Caco-2 (cell line): ENCODE measurements at regions of chr5 and their contacts with region 1.

Region 1: GRCh38 chr5:10056228-10056760 is 193.4 kb downstream of the ATPSCKMT start:
- DNase-seq: peak; percentile 55 to 67
- H3K4me3 ChIP-seq: no peak overlapping the region
- H3K4me3 Mint-ChIP-seq: no peak overlapping the region
- H3K27ac Mint-ChIP-seq: no peak overlapping the region
- H3K4me1 ChIP-seq: peaks cover 15% of the 10 kb centered on the region
- H3K4me1 Mint-ChIP-seq: peaks cover 13% of the 10 kb centered on the region
- H3K27me3 ChIP-seq: no peaks in the 10 kb centered on the region
- H3K27me3 Mint-ChIP-seq: peaks cover 6% of the 10 kb centered on the region
- CTCF ChIP-seq: no peak

Region 2: GRCh38 chr5:10111571-10111970 is 55.3 kb after region 1 on chr5:
- CTCF ChIA-PET with region 1: no interaction called
- POLR2A ChIA-PET with region 1: no interaction called
- intact Hi-C with region 1: loop called (anchors 2 kb)
- DNase-seq: peak in 1 of 2 experiments; percentile 24
- H3K4me3 ChIP-seq: no peak overlapping the region
- H3K4me3 Mint-ChIP-seq: no peak overlapping the region
- H3K27ac Mint-ChIP-seq: no peak overlapping the region
- H3K4me1 ChIP-seq: no peaks in the 10 kb centered on the region
- H3K4me1 Mint-ChIP-seq: no peaks in the 10 kb centered on the region
- H3K27me3 ChIP-seq: no peaks in the 10 kb centered on the region; the same call in 1 of the 2 replicates
- H3K27me3 Mint-ChIP-seq: no peaks in the 10 kb centered on the region
- CTCF ChIP-seq: peak; percentile 16 to 43

Region 3: GRCh38 chr5:10133830-10134229 is 77.5 kb after region 1 on chr5:
- CTCF ChIA-PET with region 1: no interaction called
- POLR2A ChIA-PET with region 1: no interaction called
- intact Hi-C with region 1: loop called (anchors 1 kb)
- DNase-seq: no peak
- H3K4me3 ChIP-seq: no peak overlapping the region
- H3K4me3 Mint-ChIP-seq: no peak overlapping the region
- H3K27ac Mint-ChIP-seq: no peak overlapping the region
- H3K4me1 ChIP-seq: no peaks in the 10 kb centered on the region
- H3K4me1 Mint-ChIP-seq: peaks cover 12% of the 10 kb centered on the region
- H3K27me3 ChIP-seq: no peaks in the 10 kb centered on the region
- H3K27me3 Mint-ChIP-seq: no peaks in the 10 kb centered on the region
- CTCF ChIP-seq: peak; percentile 6 to 16